Right lobe of liver (tissue), 6 donors: ENCODE measurements at regions of chr6 and their contacts with region 1.

Region 1: GRCh38 chr6:5143634-5144311 is 58.6 kb downstream of the PPP1R3G start:
- DNase-seq: peak; percentile 83 to 86 (median 83)
- ATAC-seq: peak; percentile 84 to 88 (median 86)
- H3K4me3 ChIP-seq: no peak overlapping the region
- H3K27ac ChIP-seq: no peak overlapping the region
- H3K4me1 ChIP-seq: peaks cover 0 to 7% (median 0%) of the 10 kb centered on the region in 4 donors
- H3K27me3 ChIP-seq: no peaks in the 10 kb centered on the region
- CTCF ChIP-seq: peak; percentile 91 to 94 (median 92)
- POLR2A ChIP-seq: no peak

Region 2: GRCh38 chr6:5302995-5303622 is 159.3 kb after region 1 on chr6:
- intact Hi-C with region 1: loop called (anchors 10 kb)
- DNase-seq: peak; percentile 65 to 80 (median 78)
- ATAC-seq: peak; percentile 99
- H3K4me3 ChIP-seq: no peak overlapping the region
- H3K27ac ChIP-seq: no peak overlapping the region
- H3K4me1 ChIP-seq: peaks cover 0 to 14% (median 0%) of the 10 kb centered on the region in 4 donors
- H3K27me3 ChIP-seq: no peaks in the 10 kb centered on the region
- CTCF ChIP-seq: peak; percentile 61 to 79 (median 74)
- POLR2A ChIP-seq: no peak

Region 3: DNA sequence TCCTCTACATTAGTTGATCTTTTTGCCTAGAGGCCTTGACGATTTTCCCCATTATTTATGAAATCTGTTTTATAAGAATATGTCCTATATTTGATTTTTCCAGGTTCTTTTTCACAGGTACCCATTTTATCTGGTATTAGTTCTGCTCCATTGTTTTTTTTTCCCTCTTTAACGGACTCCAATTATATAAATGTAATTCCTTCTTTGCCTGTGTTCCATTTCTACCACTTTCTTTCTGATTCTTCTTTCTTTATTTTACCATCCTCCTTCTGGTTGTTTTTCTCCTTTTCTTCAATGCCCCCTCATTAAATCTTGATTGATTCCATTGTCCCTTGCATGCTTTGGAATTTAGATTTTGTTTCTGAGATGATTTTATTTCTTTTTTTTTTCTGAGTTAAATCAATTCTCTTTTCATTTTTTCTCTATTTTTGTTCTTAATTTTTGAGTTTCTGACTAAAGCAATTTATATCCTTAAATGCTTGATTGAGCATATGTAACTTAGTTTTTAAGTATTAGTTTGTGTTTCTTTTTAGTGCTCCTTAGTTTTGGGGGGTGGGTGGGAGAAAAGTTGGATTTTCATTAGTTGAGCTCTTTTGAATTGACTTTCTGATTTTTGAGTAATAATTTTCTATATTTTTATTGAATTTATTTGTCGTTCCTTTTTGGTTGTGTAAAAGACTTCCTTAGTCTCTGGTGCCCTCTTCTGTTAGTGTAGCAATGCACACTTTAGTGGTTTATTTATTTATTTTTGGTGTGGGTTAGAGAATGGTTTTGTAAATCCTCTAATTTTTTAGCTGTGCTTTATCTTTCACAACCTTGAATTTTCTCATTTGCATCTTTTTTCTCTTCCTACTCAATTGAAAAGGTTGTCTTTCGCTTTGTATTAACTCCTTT is 258.3 kb after region 1 on chr6:
- intact Hi-C with region 1: loop called in 1 of 2 experiments (anchors 10 kb)
- DNase-seq: no peak
- ATAC-seq: peak in 1 of 4 donors; percentile 55
- H3K4me3 ChIP-seq: no peak overlapping the region
- H3K27ac ChIP-seq: no peak overlapping the region
- H3K4me1 ChIP-seq: no peaks in the 10 kb centered on the region
- H3K27me3 ChIP-seq: no peaks in the 10 kb centered on the region
- CTCF ChIP-seq: peak; percentile 48 to 61 (median 59)
- POLR2A ChIP-seq: no peak